ENCODE measurements at regions of chr10 and their contacts with region 1.

Region 1: DNA sequence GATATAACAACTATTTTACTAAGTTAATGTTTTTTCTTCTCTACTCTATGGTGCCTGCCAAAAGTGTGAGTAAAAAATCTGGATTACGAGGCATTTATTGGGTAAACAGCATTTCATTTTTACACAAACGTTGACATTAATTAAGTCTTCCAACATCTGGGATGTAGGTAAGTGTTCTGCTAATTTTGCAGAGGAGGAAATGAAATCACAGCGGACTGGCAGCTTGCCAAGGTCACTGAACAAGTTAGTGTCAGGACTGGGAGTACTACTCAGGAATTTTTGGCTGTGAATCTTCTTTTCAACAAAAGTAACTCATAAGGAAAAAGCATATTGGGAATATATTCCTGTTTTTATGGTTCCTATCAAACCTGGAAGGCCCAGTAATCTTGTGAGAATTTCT is 612.1 kb upstream of the FZD8 start:
- DNase-seq: peak; percentile 72 to 82 (median 79)
- ATAC-seq: peak; percentile 45 to 83 (median 60)
- H3K4me3 ChIP-seq: no peak overlapping the region
- H3K27ac ChIP-seq: no peak overlapping the region
- H3K4me1 ChIP-seq: peaks cover 0 to 19% (median 5%) of the 10 kb centered on the region in 12 donors
- H3K27me3 ChIP-seq: no peaks in the 10 kb centered on the region
- CTCF ChIP-seq: no peak
- POLR2A ChIP-seq: no peak

Region 2: DNA sequence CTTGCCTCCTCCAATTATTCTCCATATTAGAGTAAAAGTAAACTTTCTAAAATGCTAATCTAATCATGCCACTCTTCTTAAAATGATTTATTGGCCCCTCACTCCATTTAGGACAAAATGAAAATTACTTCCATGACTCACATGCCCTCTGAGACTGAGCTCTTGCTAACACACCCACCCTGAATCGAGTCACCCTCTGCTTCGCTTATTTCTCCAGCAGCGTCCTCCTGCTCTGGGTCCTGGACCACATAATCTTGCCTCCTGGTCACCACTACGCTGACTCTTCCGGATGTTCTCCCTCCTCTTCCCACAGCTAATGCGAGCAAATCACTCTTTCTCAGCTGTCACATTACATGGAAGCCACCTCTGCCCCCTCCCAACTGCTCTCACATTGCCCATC is 228.1 kb before region 1 on chr10:
- intact Hi-C with region 1: loop called in 1 of 10 experiments (anchors 5 kb)
- DNase-seq: no peak
- ATAC-seq: no peak
- H3K4me3 ChIP-seq: no peak overlapping the region
- H3K27ac ChIP-seq: no peak overlapping the region
- H3K4me1 ChIP-seq: peaks cover 0 to 8% (median 0%) of the 10 kb centered on the region in 12 donors
- H3K27me3 ChIP-seq: no peaks in the 10 kb centered on the region
- CTCF ChIP-seq: no peak
- POLR2A ChIP-seq: no peak

Region 3: GRCh38 chr10:36489611-36490228 is 235.5 kb after region 1 on chr10:
- intact Hi-C with region 1: loop called in 2 of 10 experiments (anchors 10 kb)
- DNase-seq: peak in 4 of 5 donors; percentile 44 to 65 (median 56)
- ATAC-seq: peak; percentile 59 to 83 (median 80)
- H3K4me3 ChIP-seq: no peak overlapping the region
- H3K27ac ChIP-seq: peak overlapping the region in 10 of 12 donors; percentile 5 to 69 (median 58)
- H3K4me1 ChIP-seq: peaks cover 0 to 43% (median 22%) of the 10 kb centered on the region in 12 donors
- H3K27me3 ChIP-seq: no peaks in the 10 kb centered on the region
- CTCF ChIP-seq: no peak
- POLR2A ChIP-seq: no peak